Calu3 (cell line): ENCODE measurements at regions of chr12 and their contacts with region 1.

Region 1: DNA sequence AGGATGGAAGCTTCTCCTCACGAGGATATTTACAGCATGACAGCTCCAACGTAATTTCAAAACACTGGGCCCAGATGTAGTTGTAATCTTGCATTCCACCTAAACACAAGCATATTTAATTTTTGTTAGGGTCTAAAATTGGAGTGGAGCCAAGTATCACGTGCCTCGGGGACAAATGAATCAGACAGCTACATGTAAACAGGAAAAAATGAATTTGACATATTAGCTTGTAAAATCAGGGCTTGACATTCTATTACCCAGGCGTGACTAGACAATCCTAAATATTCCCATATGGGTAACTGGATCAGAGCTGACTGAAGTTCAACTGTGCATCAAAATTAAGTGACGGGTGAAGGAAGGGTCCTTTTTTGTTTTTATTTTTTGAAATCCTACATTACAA is 59.0 kb downstream of the MDM2 start:
- DNase-seq: no peak
- H3K4me3 Mint-ChIP-seq: no peak overlapping the region
- H3K27ac Mint-ChIP-seq: no peak overlapping the region
- H3K4me1 Mint-ChIP-seq: no peaks in the 10 kb centered on the region
- H3K27me3 Mint-ChIP-seq: no peaks in the 10 kb centered on the region
- CTCF ChIP-seq: no peak

Region 2: DNA sequence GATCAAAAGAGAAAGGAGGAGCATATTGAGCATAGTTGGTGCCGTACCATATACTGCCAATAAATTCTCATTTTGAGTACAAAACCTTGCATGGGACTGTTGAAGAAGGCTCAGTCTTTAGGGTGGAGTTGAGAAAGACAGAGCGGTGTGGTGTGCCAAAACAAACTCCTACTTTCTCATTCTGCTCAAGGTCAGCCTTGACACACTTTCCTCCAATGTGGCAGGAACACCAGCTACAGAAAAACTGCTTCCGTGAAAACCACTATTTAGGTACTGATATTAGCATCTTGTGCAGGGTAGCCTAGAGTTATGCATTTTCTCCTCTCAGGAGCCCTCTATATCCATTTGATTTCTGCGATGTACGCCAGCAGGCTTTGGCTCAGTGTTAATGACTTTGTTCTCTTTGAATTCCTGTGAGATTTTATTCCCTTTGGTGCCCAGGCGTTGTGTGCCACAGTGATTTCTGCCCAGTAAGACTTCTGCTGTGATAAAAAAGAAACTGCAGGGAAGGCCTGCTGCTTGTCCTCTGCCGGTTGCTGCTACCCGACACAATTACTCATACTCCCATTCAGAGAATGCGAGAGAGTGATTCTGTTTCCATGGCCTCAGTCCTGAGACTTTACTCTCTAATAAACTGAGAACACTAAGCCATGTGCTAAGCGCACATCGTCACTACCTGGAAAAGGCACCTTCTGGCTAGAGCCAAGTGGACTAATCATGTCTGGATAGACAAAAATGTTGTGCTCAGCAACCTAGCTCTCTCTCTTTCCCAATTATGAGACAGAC is 446.5 kb before region 1 on chr12:
- CTCF ChIA-PET with region 1: no interaction called
- intact Hi-C with region 1: no loop called
- DNase-seq: no peak
- H3K4me3 Mint-ChIP-seq: no peak overlapping the region
- H3K27ac Mint-ChIP-seq: no peak overlapping the region
- H3K4me1 Mint-ChIP-seq: no peaks in the 10 kb centered on the region
- H3K27me3 Mint-ChIP-seq: no peaks in the 10 kb centered on the region
- CTCF ChIP-seq: no peak

Region 3: DNA sequence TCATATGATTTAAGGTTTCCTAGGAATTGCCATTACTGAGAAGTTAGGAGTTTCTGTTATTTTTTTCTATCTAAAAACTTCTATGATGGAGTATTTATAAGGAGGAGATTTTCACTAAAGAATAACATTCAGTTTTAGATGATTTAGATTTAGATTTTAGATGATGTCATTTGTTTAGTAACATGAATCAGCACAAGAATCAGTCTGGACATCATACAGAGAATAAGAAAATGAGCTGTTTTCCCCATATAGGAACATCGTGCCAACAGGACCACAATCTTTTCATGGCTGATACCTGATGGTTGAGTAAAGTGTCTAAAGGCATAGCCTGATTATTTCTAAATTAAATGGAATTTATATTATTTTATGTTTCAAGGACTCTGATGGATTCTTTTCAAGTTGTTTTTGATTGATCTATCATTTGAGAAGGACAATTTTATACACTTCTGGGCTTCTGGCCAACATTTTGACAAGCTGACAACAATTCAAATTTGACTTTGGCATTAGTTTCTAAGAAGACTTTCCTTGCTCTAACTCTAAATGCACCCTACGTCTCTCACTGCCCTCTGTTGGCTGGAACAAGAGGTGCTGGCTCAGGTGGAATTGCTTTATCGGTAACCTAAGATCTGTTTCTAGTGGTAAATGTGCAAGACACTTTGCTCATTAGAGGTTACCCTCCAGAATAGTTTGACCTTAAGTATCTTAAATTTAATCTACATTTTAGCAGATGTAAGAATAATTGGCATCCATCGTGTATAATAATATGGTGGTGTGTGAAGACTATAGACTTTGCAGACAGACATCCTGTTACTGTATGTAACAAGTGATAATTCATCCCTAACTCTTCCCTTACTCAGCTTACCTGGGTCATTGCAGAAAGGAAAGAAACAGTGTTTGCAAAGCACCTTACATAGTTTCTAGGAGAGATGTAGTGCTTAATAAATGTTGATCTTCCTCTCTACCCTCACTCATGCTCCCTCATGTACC is 329.6 kb after region 1 on chr12:
- CTCF ChIA-PET with region 1: no interaction called
- intact Hi-C with region 1: loop called (anchors 1 kb)
- DNase-seq: peak; percentile 41
- H3K4me3 Mint-ChIP-seq: no peak overlapping the region
- H3K27ac Mint-ChIP-seq: no peak overlapping the region
- H3K4me1 Mint-ChIP-seq: no peaks in the 10 kb centered on the region
- H3K27me3 Mint-ChIP-seq: peaks cover 22% of the 10 kb centered on the region
- CTCF ChIP-seq: peak; percentile 20

Region 4: DNA sequence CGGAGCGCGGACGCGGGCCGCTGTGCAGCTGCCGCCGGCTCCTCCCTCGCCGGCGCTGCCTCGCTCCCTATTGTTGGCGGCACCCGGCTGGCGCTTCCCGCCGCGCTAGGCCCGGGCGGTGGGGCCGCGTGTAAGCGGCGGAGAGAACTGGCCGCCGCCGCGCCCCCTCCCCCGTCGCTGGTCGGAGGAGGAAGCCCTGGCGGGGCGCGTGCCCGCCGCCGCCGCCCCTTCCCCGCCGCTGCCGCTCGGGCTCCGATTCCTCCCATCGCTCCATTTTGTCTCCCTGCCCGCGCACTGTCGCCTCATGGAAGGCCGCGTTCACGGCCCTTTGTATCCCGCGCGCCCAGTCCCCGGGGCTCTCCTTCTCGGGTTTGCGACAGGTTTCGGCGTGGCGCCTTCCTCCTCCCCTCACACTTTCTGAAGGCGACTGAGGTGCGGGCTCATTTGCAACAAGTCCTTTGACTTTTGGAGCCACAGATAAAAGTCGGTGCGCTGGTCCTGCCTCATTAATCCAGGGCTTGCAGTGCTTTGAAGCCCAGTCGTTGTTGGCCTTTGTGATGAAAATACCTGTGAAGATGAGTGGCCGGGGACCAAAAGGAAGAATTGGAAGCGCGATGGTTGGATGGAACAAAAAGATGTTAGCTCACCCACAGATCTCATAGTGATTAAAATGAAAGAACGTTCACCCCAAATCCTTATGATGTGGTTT is 373.1 kb after region 1 on chr12:
- CTCF ChIA-PET with region 1: no interaction called
- intact Hi-C with region 1: loop called (anchors 10 kb)
- DNase-seq: peak; percentile 66
- H3K4me3 Mint-ChIP-seq: peak overlapping the region; percentile 98
- H3K27ac Mint-ChIP-seq: peak overlapping the region; percentile 98
- H3K4me1 Mint-ChIP-seq: peaks cover 28% of the 10 kb centered on the region
- H3K27me3 Mint-ChIP-seq: no peaks in the 10 kb centered on the region
- CTCF ChIP-seq: no peak